ENCODE measurements at regions of chr2 and their contacts with region 1.

Region 1: DNA sequence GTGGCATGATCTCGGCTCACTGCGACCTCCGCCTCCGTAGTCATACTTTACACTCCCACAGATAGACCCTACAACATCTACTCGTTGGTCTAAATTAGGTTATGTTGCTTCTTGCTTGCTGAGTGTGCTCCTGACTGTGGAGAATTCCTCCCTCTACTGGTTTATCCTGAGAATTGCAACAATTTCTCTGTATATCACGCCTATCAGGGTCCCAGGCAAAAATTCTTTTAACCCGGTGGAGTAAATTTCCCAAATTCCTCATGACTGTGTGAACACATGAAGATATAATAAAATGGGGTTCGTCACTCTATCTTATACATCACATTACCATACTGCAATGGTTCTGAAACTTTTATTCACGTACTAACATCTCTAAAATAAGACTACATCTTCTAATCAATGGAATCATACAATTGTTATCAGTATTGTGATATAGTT is 156.7 kb downstream of the EVA1A start:
- DNase-seq: peak; percentile 35
- H3K4me3 ChIP-seq: no peak overlapping the region
- H3K27ac ChIP-seq: no peak overlapping the region
- H3K4me1 ChIP-seq: no peaks in the 10 kb centered on the region
- H3K27me3 ChIP-seq: peaks cover 3% of the 10 kb centered on the region
- CTCF ChIP-seq: peak; percentile 76 to 85

Region 2: GRCh38 chr2:75053484-75054112 is 350.4 kb before region 1 on chr2:
- CTCF ChIA-PET with region 1: no interaction called
- dilution Hi-C with region 1: no loop called
- in situ Hi-C with region 1: no loop called
- intact Hi-C with region 1: loop called (anchors 2 kb)
- DNase-seq: peak; percentile 24
- H3K4me3 ChIP-seq: no peak overlapping the region
- H3K27ac ChIP-seq: no peak overlapping the region
- H3K4me1 ChIP-seq: no peaks in the 10 kb centered on the region
- H3K27me3 ChIP-seq: no peaks in the 10 kb centered on the region
- CTCF ChIP-seq: peak; percentile 76 to 90

Region 3: DNA sequence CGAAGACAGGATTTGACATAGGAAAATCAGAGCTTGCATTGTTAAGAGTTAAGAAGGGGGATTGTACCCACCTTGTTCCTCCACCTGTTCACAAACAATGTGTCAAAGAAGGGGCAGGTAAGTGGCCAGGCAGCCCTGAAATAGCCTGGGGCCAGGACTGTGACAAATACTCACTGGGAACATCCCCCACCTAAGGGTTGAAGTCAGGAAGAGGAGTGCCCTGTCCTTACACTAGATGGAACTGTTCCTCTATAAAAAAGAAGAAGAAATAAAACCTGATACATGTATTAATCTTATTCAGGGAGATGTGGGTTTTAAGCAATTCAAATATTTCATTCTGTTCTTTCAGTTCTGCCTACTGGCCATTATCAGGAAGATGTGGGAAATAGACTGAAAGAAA is 246.6 kb before region 1 on chr2:
- CTCF ChIA-PET with region 1: no interaction called
- dilution Hi-C with region 1: no loop called
- in situ Hi-C with region 1: no loop called
- intact Hi-C with region 1: loop called (anchors 1 kb)
- DNase-seq: no peak
- H3K4me3 ChIP-seq: no peak overlapping the region
- H3K27ac ChIP-seq: no peak overlapping the region
- H3K4me1 ChIP-seq: no peaks in the 10 kb centered on the region
- H3K27me3 ChIP-seq: peaks cover 2% of the 10 kb centered on the region
- CTCF ChIP-seq: peak; percentile 12 to 49

Region 4: DNA sequence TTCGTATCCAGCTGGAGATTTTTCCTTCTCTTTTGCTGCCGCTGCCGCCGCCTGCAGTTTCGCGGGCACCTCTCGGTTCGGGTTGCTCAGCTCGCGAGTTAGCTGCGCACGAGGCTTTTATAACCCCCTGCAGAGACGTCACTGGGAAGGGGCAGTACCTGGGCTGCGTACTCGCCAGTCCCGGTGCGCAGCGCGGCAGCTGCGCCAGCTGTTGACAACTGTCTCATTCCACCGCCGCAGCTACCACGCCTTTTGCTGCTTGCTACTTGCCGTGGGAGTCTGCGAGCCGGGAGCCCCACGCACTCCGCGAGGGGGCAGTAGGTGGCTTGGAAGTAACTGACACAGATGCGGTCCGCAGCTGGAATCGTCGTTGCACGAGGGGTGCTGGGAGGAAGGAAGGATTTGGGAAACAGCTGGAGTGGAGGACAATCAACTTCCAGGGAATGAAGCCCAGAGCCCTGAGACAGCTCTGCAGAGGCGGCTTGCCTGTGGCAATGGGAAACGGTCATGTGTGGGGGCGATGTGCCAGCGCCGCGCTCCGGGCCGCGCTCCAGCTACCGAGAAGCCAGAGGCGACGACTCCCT is 204.5 kb before region 1 on chr2 and contains the start of gene TACR1:
- CTCF ChIA-PET with region 1: no interaction called
- dilution Hi-C with region 1: no loop called
- in situ Hi-C with region 1: no loop called
- intact Hi-C with region 1: loop called (anchors 1 kb)
- DNase-seq: peak; percentile 40
- H3K4me3 ChIP-seq: peak within 1 kb of the TSS in 2 of 3 experiments; percentile 23
- H3K27ac ChIP-seq: no peak within 1 kb of the TSS
- H3K4me1 ChIP-seq: peaks cover 17% of the 10 kb centered on the region
- H3K27me3 ChIP-seq: peaks cover 39% of the 10 kb centered on the region
- CTCF ChIP-seq: peak; percentile 41 to 56
- total RNA-seq, gene TACR1: not detected

Region 5: DNA sequence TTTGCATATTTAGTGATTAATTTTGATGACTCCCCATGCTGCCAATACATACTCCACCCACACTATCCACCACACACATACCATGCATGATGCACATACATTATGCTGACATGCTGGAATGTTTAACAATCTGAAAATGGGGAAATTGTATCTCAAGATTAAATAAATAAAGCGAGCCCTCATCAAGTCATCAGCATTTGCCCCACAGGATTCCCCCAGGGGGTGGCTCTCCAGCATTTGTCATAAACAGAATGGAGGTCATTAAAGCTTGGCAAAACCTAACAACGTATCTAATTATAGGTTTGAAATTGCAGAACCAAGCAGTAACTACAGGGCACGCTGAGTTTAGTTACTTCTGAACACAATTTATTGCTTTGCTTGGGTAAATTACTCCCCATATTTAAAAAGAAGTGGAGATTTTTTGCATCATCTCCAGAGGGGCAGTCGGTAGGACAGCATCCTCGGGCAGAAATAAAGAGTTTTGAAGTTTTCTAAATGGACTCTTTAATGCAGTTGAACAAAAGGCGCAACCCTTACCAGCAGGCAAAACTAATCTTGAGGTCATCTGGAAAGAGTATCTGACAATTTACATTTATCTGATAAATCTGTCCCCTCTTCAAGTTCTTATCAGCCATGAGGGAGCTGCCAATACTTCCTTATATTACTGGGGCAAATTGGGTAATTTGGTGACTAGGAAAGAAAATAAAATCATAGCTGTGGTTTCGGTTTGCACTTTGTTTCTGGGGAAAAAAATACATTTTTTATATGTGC is 63.3 kb before region 1 on chr2:
- CTCF ChIA-PET with region 1: no interaction called
- dilution Hi-C with region 1: no loop called
- in situ Hi-C with region 1: no loop called
- intact Hi-C with region 1: no loop called
- DNase-seq: no peak
- H3K4me3 ChIP-seq: no peak overlapping the region
- H3K27ac ChIP-seq: no peak overlapping the region
- H3K4me1 ChIP-seq: no peaks in the 10 kb centered on the region
- H3K27me3 ChIP-seq: peaks cover 2% of the 10 kb centered on the region
- CTCF ChIP-seq: no peak

Region 6: DNA sequence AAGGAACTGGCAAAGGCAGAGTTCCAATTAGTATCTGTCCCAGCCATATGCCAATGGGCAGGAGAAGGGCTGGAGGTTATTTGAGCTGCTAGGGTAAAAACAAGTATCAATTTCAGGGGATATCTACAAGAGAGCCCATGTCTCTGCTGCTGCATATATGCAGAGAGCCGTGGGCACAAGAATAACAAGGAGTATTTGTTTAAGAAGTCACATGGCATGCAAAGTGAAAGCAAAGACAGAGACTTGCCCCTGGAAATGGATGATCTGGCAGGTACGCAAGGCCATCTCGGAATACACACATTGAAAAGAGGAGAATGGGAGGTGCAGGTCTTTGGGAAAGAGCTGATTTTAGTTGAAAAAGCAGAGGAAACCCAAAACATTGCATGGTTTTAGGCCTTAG is 13.8 kb before region 1 on chr2:
- CTCF ChIA-PET with region 1: no interaction called
- dilution Hi-C with region 1: no loop called
- in situ Hi-C with region 1: no loop called
- intact Hi-C with region 1: no loop called
- DNase-seq: no peak
- H3K4me3 ChIP-seq: no peak overlapping the region
- H3K27ac ChIP-seq: no peak overlapping the region
- H3K4me1 ChIP-seq: peaks cover 8% of the 10 kb centered on the region
- H3K27me3 ChIP-seq: no peaks in the 10 kb centered on the region
- CTCF ChIP-seq: no peak